Aorta (tissue), 5 donors: ENCODE measurements at regions of chr11 and their contacts with region 1.

Region 1: GRCh38 chr11:3854977-3855807 is at the start of gene STIM1:
- DNase-seq: peak; percentile 97 to 99
- ATAC-seq: peak; percentile 96
- H3K4me3 ChIP-seq: peak within 1 kb of the TSS; percentile 61 to 77
- H3K27ac ChIP-seq: peak within 1 kb of the TSS; percentile 63 to 82
- H3K4me1 ChIP-seq: peaks cover 3 to 9% of the 10 kb centered on the region in 2 donors
- H3K27me3 ChIP-seq: no peaks in the 10 kb centered on the region
- total RNA-seq, gene STIM1: 63.4 to 69.5 TPM

Region 2: DNA sequence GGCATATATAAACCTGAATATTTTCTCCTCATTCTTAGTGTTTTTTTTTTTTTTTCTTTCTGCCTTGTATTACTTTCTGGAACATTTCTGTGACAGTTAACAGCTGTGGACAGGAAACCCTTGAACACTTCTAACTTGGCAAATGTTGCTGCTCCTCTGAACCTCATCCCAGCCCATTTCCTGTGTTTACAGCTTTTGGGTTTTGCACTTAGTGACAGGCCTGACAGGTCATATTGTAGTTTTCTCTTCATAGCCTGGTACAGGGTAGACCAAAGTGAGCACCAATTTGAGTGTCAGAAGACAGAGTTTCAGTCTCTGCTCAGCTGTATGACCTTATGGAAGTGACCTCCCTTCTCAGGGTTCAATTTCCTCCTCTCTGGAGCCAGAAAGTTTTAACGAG is 91.9 kb after region 1 on chr11:
- intact Hi-C with region 1: loop called (anchors 5 kb)
- DNase-seq: no peak
- ATAC-seq: peak; percentile 66
- H3K4me3 ChIP-seq: no peak overlapping the region
- H3K27ac ChIP-seq: peak overlapping the region; percentile 84 to 91
- H3K4me1 ChIP-seq: peaks cover 7 to 32% of the 10 kb centered on the region in 2 donors
- H3K27me3 ChIP-seq: no peaks in the 10 kb centered on the region

Region 3: DNA sequence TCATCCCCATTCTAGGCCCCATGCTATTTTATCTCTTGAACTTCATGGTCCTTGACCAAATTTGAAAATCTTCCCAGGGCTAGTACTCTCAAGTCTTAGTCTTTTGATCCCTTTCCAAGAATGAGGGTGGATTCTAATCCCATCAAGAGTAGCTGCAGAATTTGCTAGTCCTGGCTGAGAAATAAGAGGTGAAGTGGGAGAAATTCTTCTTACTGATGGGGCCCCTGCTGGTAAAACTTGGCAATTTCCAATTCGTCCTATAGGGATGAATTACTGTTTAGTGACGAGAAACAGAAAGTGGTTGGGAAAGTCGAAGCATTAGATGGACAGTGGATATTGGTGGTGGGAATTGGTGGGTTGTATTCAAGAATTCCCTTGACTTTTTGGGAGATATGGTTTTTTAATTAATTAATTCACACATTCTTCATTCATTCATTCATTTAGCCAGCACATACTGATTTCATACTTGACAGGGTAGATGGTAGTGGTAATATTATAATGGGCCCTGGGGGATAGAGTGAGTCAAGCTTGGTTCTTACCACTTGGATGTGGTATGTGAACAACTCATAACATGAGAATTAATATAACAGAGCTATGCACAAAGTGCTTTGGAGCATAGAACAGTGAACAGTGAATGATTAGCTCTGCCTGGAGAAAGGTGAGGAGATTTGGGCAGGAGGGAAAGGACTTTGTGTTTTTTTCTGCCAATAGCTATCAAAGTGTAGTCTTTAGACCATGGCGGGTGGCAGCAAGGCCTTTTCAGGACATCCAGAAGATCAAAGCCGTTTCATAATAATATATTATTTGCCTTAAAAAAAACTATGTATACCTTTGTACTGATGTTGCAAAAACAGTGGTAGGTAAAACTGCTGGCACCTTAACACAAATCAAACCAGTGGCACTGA is 104.1 kb after region 1 on chr11:
- intact Hi-C with region 1: loop called in 1 of 2 experiments (anchors 5 kb)
- DNase-seq: no peak
- ATAC-seq: no peak
- H3K4me3 ChIP-seq: no peak overlapping the region
- H3K27ac ChIP-seq: no peak overlapping the region
- H3K4me1 ChIP-seq: peaks cover 2 to 6% of the 10 kb centered on the region in 2 donors
- H3K27me3 ChIP-seq: no peaks in the 10 kb centered on the region

Region 4: DNA sequence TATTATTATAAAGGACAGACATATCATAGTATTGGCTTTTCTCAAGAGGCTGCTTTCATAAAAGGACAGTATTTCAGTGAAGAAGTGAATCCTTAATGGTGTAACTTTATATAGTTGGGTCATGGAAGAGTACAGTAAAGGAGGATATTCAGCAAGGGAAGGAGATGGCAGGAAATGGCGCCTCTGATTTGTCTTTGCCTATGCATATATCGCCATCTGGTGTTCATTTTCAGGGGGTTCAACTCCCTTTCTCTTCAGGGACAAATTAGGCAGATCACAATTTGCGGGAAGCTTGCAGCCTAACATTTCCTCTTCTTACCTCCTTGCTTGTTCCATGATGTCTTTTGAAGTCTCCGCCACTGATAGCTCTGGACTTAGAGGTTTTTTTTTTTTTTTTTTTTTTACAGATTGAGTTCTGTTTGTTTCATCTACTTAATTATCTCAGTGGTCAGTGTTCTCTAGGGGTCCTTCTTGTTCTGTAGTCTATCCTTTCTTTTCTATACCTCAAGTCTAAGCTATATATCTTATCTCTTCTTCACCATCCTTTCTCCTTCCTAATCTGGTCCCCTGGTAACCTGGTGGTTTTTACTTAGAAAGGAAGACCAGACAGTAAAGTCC is 217.6 kb after region 1 on chr11:
- intact Hi-C with region 1: loop called in 1 of 2 experiments (anchors 1 kb)
- DNase-seq: no peak
- ATAC-seq: peak; percentile 90
- H3K4me3 ChIP-seq: no peak overlapping the region
- H3K27ac ChIP-seq: no peak overlapping the region
- H3K4me1 ChIP-seq: no peaks in the 10 kb centered on the region
- H3K27me3 ChIP-seq: no peaks in the 10 kb centered on the region